Activated T-helper 1 cell treated with anti-CD3 and anti-CD28 coated beads, Interleukin-12 subunit alpha, Interleukin-12 subunit beta, Interleukin-2, Interleukin-4 antibody, amounts not matched to agents 30 ng/mL and 10 ng/mL and 1 ng/mL, durations not matched to agents 14 hours and 24 hours and 36 hours (primary cell): ENCODE measurements at regions of chr2 and their contacts with region 1.

Region 1: DNA sequence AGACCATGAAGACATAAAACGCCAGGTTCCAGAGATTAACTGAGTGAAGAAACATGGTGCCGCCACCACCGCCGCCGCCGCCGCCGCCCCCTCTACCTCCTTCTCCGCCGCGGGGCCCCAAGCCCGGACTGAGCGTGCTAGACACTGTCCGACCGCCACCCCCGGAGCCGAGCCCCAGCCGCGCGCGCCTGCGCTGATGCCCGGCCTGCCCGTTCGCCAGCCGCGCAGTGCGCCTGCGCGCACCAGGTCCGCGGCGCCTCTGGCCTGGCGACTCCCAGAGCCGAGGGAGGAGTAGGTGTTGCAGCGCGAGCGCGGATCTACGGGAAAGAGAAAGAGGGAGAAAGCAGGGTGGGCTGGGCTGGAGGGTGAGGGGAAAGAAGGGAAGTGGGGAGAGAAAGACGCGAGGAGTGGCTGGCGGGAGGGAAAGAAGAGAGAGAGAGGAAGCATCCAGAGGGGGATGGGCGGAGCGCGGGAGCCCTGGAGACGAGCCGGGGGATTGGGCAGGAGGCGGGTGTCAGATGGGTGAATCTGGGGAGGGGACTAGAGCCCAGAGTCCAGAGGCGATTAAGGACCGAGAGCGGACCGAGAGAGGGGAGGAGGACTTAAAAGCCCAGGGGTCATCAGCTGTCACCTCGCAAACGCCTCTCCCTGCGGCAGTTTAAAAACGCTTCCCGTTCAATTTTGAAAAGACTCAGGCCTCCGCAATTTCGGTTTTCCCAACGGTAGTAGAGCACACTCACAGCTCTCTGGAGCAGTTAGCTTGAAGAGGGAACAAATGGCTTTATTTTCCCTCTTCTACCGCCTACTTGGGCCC is at the start of gene PGAP1:
- DNase-seq: peak; percentile 87
- H3K4me3 Mint-ChIP-seq: peak within 1 kb of the TSS; percentile 95
- H3K27ac Mint-ChIP-seq: peak within 1 kb of the TSS; percentile 99
- H3K4me1 Mint-ChIP-seq: peaks cover 45% of the 10 kb centered on the region
- H3K27me3 Mint-ChIP-seq: peaks cover 1% of the 10 kb centered on the region
- total RNA-seq, gene PGAP1: 30.1 TPM in 2 replicates

Region 2: DNA sequence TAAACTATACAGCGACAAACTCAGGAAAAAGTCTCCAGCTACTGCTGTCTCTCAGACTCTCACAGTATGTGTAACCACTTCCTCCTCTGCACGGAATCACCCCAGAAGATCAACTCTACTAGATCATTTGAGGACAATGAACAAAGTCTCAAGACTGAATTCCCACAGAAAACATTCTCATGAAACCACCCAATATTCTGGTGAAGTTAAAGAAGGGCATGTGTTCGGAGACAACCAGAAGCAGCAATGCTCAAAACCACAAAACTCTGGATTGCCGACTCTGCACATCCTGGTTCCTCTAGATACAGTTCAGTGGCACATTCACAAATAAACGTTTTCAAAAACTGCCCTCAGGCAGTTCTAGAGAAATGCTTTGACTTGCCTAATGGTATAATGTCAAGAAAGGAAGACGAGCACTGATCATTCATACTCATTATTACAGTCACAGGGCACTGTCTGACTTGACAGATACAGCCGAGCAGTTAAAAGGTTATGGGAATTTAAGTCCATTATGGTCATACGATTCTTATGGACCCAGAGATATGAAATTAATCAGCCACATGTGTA is 663.5 kb before region 1 on chr2:
- intact Hi-C with region 1: loop called (anchors 10 kb)
- DNase-seq: peak; percentile 57
- H3K4me3 Mint-ChIP-seq: peak overlapping the region; percentile 65
- H3K27ac Mint-ChIP-seq: peak overlapping the region; percentile 88
- H3K4me1 Mint-ChIP-seq: peaks cover 79% of the 10 kb centered on the region
- H3K27me3 Mint-ChIP-seq: no peaks in the 10 kb centered on the region

Region 3: GRCh38 chr2:196875414-196875813 is 51.4 kb before region 1 on chr2:
- intact Hi-C with region 1: loop called (anchors 2 kb)
- DNase-seq: no peak
- H3K4me3 Mint-ChIP-seq: no peak overlapping the region
- H3K27ac Mint-ChIP-seq: no peak overlapping the region
- H3K4me1 Mint-ChIP-seq: peaks cover 23% of the 10 kb centered on the region
- H3K27me3 Mint-ChIP-seq: no peaks in the 10 kb centered on the region

Region 4: GRCh38 chr2:196961889-196962288 is 35.1 kb after region 1 on chr2:
- intact Hi-C with region 1: loop called (anchors 1 kb)
- DNase-seq: no peak
- H3K4me3 Mint-ChIP-seq: peak overlapping the region; percentile 13
- H3K27ac Mint-ChIP-seq: peak overlapping the region; percentile 57
- H3K4me1 Mint-ChIP-seq: peaks cover 40% of the 10 kb centered on the region
- H3K27me3 Mint-ChIP-seq: no peaks in the 10 kb centered on the region

Region 5: DNA sequence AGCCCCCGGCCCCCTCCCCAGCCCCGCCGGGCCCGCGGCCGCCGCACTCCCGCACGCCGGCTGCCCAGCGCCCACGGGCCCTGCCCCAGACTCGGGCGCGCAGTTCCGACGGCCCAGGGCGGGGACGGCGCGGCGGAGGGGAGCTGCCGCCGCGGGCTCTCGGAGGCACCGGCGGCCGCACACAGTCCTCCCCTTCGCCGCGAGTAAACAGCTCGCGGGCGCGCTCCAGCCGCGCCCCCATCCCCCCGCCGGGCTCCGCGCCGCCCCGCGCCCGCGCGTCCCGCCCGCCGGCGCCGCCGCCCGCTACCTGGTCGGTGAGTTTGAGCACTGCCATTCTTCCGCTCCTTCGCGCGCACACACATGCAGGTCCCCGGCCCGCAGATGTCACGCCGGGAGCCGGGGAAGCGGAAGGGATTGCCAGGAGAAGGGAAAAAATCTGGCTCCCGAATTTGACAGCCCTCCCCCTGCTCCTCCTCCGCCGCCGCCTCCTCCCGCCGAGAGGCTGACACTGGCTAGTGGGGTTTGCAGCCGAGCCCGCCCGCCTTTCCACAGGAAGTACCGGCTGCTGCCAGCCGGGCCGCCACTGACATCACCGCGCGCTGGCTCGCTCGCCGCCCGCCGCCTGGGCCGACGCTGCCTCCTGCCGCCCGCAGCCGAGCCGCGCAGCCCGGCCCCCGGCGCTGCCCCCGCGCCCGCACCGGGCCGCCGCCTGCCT is 383.7 kb after region 1 on chr2 and contains the start of gene ANKRD44:
- intact Hi-C with region 1: loop called (anchors 5 kb)
- DNase-seq: peak; percentile 87
- H3K4me3 Mint-ChIP-seq: peak within 1 kb of the TSS; percentile 91
- H3K27ac Mint-ChIP-seq: peak within 1 kb of the TSS; percentile 98
- H3K4me1 Mint-ChIP-seq: peaks cover 68% of the 10 kb centered on the region
- H3K27me3 Mint-ChIP-seq: no peaks in the 10 kb centered on the region
- total RNA-seq, gene ANKRD44: 153 and 159 TPM in 2 replicates

Region 6: GRCh38 chr2:197499594-197500526 is 573.1 kb after region 1 on chr2 and contains the starts of genes HSPD1 and HSPE1:
- intact Hi-C with region 1: loop called (anchors 1 kb)
- DNase-seq: peak; percentile 98
- H3K4me3 Mint-ChIP-seq: peak within 1 kb of the TSS; percentile 100
- H3K27ac Mint-ChIP-seq: peak within 1 kb of the TSS; percentile 99
- H3K4me1 Mint-ChIP-seq: peaks cover 50% of the 10 kb centered on the region
- H3K27me3 Mint-ChIP-seq: no peaks in the 10 kb centered on the region
- total RNA-seq, gene HSPD1: 811 and 821 TPM in 2 replicates
- total RNA-seq, gene HSPE1: 325 and 343 TPM in 2 replicates